ENCODE measurements at regions of chr21 and their contacts with region 1.

Region 1: DNA sequence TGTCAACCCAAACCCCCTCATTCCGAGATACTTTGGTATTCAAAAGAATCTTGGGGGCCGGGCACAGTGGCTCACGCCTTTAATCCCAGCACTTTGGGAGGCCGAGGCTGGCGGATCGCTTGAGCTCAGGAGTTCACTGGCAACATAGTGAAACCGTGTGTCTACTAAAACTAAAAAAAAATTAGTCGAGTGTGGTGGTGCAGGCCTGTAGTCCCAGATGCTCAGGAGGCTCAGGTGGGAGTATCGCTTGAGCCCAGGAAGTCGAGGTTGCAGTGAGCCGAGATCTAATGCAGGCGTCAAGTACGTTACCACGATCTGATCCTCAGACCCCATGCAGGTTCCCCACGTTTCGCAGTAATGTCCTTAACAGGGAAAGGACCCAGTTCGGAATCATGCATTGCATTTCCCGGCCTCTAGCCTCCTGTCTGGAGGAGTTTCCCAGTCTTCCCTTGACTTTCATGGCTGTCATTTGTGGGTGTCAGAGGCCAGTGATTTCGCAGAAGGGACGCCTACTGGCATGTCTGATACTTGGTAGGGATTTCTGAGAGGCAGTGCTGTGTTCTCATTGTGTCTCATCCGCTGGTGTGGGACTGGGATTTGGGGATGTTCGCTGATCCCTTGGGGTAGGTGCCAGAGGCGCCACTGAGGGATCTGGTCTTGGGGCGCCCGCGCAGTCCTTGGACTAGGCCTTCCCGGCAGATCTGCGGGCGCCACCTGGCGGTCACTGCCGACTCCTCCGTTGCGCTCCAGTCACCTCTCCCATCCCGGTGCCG is 39.3 kb upstream of the HMGN1 start:
- DNase-seq: peak; percentile 89
- H3K4me3 ChIP-seq: peak overlapping the region; percentile 28 to 41
- H3K27ac ChIP-seq: peak overlapping the region; percentile 81 to 86
- H3K4me1 ChIP-seq: peaks cover 0 to 3% of the 10 kb centered on the region in 2 donors
- H3K27me3 ChIP-seq: no peaks in the 10 kb centered on the region
- CTCF ChIP-seq: peak; percentile 90 to 96 (median 92)
- POLR2A ChIP-seq: no peak

Region 2: DNA sequence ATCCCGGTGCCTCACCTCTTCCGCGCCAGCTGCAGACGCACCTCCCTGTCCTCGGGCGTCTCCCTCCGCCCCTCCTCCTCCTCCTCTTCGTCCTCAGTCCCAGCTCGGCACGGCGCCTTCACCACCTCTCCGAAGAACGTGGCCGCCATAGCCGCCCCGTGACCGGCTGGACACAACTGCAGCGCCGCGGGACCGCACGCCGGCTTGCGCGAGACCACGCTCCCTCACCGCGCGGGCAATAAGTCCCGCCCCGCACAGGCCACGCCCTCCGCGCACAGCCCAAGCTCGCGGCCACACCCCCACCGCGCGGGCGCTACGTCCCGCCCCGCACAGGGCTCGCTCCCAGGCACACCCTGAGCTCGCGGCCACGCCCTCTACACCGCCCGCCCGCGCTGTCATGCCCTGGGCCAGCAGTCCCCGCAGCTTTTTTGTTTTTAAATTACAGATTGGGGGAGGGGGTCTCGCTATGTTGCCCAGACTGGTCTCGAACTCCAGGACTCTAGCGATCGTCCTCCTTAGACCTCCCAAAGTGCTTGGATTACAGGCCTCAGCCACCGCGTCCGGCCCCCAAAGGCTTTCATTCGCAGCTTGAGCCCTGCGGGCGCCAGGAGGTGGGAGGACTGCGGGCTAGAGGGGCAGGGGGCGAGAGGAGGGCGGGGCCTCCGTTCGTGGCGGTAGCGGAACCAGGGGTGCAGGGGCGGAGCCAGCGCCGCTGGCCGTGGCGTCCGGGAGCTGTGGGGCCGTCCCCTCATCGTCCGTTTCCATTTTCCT is 204.8 kb before region 1 on chr21 and contains the start of gene PSMG1:
- intact Hi-C with region 1: loop called (anchors 10 kb)
- DNase-seq: peak; percentile 91 to 92
- H3K4me3 ChIP-seq: peak within 1 kb of the TSS; percentile 76 to 83
- H3K27ac ChIP-seq: peak within 1 kb of the TSS; percentile 94 to 95
- H3K4me1 ChIP-seq: no peaks in the 10 kb centered on the region
- H3K27me3 ChIP-seq: no peaks in the 10 kb centered on the region
- CTCF ChIP-seq: peak in 1 of 4 experiments; percentile 4
- POLR2A ChIP-seq: peak; percentile 68 to 79
- total RNA-seq, gene PSMG1: 21.0 to 33.8 (median 23.4) TPM

Region 3: DNA sequence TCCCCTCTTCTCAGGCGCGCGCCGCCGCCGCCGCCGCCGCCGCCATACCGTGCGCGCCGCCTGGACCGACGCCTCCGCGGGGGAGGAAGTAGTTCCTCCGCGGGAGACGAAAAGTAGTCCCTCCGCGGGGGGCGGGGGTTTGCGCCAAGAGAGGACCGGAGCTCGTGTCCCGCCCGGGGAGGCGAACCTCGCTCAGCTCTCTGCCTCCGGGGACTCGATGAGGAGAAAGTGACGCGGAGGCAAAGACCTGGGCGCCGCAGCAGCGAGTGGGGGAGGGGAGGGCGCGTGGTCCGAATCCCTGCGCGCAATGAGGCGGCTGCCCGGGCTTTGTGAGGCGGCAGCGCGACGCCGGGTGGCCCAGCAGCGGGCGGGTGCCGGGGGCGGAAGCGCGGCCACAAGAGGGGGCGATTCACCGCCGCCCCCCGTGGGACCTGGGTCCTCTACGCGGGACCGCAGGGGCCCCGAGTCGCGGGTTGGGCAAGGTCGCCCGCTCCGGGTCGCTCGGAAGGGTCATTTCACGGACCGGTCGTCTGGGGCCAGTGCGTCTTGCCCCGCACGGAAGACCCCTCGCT is 74.6 kb before region 1 on chr21 and contains the start of gene BRWD1:
- intact Hi-C with region 1: loop called (anchors 10 kb)
- DNase-seq: peak; percentile 77 to 78
- H3K4me3 ChIP-seq: peak within 1 kb of the TSS; percentile 73 to 88
- H3K27ac ChIP-seq: peak within 1 kb of the TSS; percentile 96
- H3K4me1 ChIP-seq: no peaks in the 10 kb centered on the region
- H3K27me3 ChIP-seq: no peaks in the 10 kb centered on the region
- CTCF ChIP-seq: peak in 3 of 4 experiments; percentile 2 to 44 (median 39)
- POLR2A ChIP-seq: peak; percentile 15 to 70
- total RNA-seq, gene BRWD1: 55.6 to 183 (median 65.4) TPM

Measured in uterus (tissue), 4 donors.